ENCODE measurements at regions of chr19 and their contacts with region 1.

Region 1: DNA sequence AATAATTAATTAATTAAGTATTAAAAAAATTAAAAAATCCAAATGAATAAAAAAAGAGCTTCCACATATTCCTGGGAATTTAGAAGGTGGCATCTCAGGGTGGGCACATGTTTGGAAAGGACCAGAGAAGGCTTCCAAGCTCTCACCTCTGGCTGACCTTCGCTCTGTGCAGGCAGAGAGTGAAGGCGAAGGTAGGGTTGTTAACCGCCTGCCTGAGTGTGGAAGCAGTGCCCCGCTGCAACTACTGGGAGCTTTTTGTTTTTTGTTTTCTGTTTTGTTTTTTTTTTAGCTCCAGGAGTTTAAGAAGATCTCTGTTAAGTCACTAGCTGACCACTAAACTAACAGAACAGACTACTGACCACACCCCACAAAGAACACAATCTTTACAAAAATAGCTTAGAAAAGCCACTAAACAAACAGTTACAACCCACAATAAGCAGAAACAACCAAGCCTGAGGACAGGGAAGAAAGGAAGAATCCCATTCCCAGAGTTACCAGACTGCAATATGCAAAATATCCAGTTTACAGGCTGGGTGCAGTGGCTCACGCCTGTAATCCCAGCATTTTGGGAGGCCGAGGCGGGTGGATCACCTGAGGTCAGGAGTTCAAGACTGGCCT is 11.4 kb downstream of the ZNF541 start:
- DNase-seq: no peak
- H3K4me3 ChIP-seq: no peak overlapping the region
- H3K27ac ChIP-seq: no peak overlapping the region
- H3K4me1 ChIP-seq: no peaks in the 10 kb centered on the region
- H3K27me3 ChIP-seq: no peaks in the 10 kb centered on the region
- CTCF ChIP-seq: no peak
- EP300 ChIP-seq: no peak
- POLR2A ChIP-seq: no peak

Region 2: GRCh38 chr19:47132194-47132852 is 429.2 kb before region 1 on chr19:
- intact Hi-C with region 1: no loop called
- DNase-seq: no peak
- H3K4me3 ChIP-seq: peak overlapping the region in 3 of 4 donors; percentile 71 to 91 (median 86)
- H3K27ac ChIP-seq: peak overlapping the region in 3 of 4 donors; percentile 92 to 98 (median 96)
- H3K4me1 ChIP-seq: peaks cover 0 to 57% (median 43%) of the 10 kb centered on the region in 4 donors
- H3K27me3 ChIP-seq: no peaks in the 10 kb centered on the region
- CTCF ChIP-seq: no peak
- EP300 ChIP-seq: no peak
- POLR2A ChIP-seq: no peak

Region 3: GRCh38 chr19:47348819-47349795 is 212.4 kb before region 1 on chr19 and contains the start of gene DHX34:
- intact Hi-C with region 1: no loop called
- DNase-seq: peak; percentile 100
- H3K4me3 ChIP-seq: peak within 1 kb of the TSS; percentile 65 to 97 (median 92)
- H3K27ac ChIP-seq: peak within 1 kb of the TSS; percentile 70 to 82 (median 78)
- H3K4me1 ChIP-seq: peaks cover 0 to 25% (median 18%) of the 10 kb centered on the region in 4 donors
- H3K27me3 ChIP-seq: no peaks in the 10 kb centered on the region
- CTCF ChIP-seq: peak; percentile 96 to 99 (median 98)
- EP300 ChIP-seq: no peak
- POLR2A ChIP-seq: peak; percentile 61 to 68
- total RNA-seq, gene DHX34: 8.6 to 11.9 (median 9.6) TPM

Region 4: DNA sequence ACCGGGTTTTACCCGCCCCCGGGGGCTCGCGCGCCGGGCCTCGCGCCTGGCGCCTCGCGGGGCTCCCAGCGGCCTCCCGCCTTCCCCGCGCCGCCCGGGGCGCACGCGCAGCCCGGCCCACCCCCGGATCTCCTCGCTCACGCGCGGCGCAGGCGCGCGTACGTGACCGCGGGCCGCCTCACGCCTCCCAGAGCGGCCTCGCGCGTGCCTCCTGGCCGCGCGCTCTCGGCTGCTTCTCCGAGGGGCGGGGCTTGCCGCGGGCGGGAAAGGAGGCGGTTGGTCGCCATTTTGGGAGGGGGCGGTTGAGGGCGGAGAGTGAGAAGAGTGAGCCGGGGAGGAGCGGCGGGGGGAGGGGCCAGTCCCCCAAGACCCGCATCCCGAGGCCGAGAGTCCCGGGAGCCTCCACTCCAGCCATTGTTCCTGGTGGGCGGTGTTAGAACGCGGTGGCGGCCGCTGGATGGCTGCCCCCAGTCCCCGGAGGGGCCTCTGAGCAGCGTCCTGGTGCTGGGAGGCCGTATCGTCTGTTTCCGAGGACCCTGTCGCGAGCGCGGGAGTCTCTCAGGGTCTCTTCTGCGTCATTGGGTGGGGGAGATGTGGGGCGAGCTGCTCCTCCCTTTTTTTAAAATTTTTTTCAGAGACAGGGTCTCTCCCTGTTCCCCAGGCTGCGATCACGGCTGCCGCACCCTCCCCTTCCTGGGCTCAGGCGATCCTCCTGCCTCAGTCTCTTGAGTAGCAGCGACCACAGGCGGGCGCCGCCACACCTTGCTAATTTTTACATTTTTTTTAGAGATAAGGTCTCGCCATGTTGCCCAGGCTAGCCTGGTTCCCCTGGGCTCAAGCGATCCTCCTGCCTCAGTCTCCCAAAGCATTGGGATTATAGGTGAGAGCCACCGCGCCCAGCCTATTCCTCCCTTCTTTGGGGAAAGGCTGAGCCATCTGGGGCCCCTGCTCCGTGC is 11.8 kb after region 1 on chr19 and contains the start of gene ZNF541:
- intact Hi-C with region 1: loop called (anchors 2 kb)
- DNase-seq: peak; percentile 73
- H3K4me3 ChIP-seq: peak within 1 kb of the TSS; percentile 8 to 49 (median 44)
- H3K27ac ChIP-seq: peak within 1 kb of the TSS in 3 of 4 donors; percentile 41 to 43 (median 42)
- H3K4me1 ChIP-seq: peaks cover 0 to 11% (median 5%) of the 10 kb centered on the region in 4 donors
- H3K27me3 ChIP-seq: no peaks in the 10 kb centered on the region
- CTCF ChIP-seq: no peak
- EP300 ChIP-seq: no peak
- POLR2A ChIP-seq: no peak
- total RNA-seq, gene ZNF541: 1.1 to 1.7 (median 1.5) TPM in 3 of 4 donors, not detected in the other

Measured in sigmoid colon (tissue), 7 donors.